Right cardiac atrium (tissue), 5 donors: ENCODE measurements at regions of chr12 and their contacts with region 1.

Region 1: GRCh38 chr12:94649349-94650142 is 811 bp downstream of the TMCC3 start:
- DNase-seq: peak; percentile 49 to 85 (median 82)
- ATAC-seq: peak; percentile 83 to 86
- H3K4me3 ChIP-seq: peak overlapping the region; percentile 76
- H3K27ac ChIP-seq: peak overlapping the region; percentile 21
- H3K4me1 ChIP-seq: no peaks in the 10 kb centered on the region
- H3K27me3 ChIP-seq: no peaks in the 10 kb centered on the region

Region 2: GRCh38 chr12:94596596-94596995 is 53.0 kb before region 1 on chr12:
- intact Hi-C with region 1: loop called in 1 of 4 experiments (anchors 10 kb)
- DNase-seq: no peak
- ATAC-seq: no peak
- H3K4me3 ChIP-seq: no peak overlapping the region
- H3K27ac ChIP-seq: no peak overlapping the region
- H3K4me1 ChIP-seq: no peaks in the 10 kb centered on the region
- H3K27me3 ChIP-seq: no peaks in the 10 kb centered on the region

Region 3: DNA sequence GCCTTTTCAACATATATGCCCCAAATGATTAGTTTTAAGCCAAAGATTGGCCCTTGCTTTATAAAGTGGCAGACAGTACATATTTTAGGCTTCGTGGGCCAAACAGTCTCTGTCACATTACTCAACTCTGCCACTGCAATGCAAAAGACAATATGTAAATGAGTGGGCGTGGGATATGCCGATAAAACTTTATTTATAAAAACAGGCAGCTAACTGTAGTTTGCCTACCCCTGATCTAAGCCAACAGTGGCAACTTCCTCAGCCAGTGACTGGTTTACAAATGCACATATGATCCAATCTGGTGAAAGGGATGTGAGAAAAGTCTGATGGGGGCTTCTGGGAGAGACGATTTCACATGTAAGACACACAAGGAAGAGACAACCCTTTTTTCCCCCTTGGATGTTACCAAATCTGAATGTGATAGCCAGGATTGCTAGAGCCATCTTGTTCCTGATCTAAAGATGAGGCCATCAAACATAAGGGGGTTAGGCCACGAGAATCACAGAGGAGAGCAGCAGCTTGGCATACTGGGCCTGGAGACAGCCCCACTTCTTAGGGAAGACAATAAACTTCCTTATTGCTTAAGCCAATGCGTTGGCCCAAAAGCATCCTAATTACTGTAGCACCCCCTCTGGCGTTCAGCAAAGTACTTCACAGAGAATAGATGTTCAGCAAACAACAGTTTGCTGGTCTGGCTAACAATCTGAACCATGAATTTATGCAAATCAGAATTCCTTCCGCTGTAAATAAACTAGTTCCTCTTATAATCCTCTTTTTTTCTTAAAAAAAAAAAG is 76.0 kb after region 1 on chr12:
- intact Hi-C with region 1: loop called in 1 of 4 experiments (anchors 5 kb)
- DNase-seq: peak in 1 of 3 donors; percentile 39
- ATAC-seq: peak; percentile 61 to 69
- H3K4me3 ChIP-seq: no peak overlapping the region
- H3K27ac ChIP-seq: no peak overlapping the region
- H3K4me1 ChIP-seq: peaks cover 2% of the 10 kb centered on the region
- H3K27me3 ChIP-seq: no peaks in the 10 kb centered on the region

Region 4: DNA sequence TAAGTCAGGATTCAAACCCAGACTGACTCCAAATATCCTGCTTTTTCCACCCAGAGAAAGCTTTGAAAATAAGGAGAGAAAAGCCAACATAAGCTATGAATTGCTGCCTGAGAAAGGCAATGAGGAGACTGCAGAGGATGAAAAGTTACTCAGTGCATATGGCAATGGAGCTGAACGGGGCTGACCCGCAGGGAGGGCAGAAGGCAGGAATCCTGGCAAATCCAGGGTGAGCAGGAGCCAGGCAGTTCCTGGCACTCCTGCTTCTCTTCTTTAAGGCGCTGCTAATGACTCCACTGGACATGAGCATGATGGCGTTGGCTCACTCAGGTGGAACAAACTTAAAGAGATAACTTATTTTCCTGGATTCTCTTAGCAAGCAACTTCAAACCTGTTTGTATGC is 96.0 kb after region 1 on chr12:
- intact Hi-C with region 1: no loop called
- DNase-seq: no peak
- ATAC-seq: no peak
- H3K4me3 ChIP-seq: no peak overlapping the region
- H3K27ac ChIP-seq: no peak overlapping the region
- H3K4me1 ChIP-seq: no peaks in the 10 kb centered on the region
- H3K27me3 ChIP-seq: no peaks in the 10 kb centered on the region

Region 5: DNA sequence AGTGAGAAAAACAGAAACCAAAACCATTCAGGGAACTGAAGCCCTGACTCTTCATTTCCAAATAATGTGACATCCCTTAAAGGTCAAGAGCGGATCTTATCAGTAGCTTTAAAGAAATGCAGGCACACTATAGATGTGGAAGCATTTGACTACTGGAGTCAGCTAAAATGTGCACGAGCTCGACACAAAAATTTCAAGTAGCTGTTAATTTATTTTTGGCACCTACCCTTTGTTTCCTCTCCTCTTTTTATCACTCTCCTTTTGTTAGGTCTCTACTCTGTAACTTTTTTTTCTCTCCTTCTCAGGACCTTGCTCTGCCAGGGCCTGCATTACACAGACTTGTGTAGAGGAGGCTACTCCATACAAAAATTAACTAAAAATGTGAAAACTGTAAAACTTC is 509.4 kb after region 1 on chr12:
- intact Hi-C with region 1: no loop called
- DNase-seq: no peak
- ATAC-seq: peak; percentile 28 to 55
- H3K4me3 ChIP-seq: no peak overlapping the region
- H3K27ac ChIP-seq: no peak overlapping the region
- H3K4me1 ChIP-seq: no peaks in the 10 kb centered on the region
- H3K27me3 ChIP-seq: no peaks in the 10 kb centered on the region